ENCODE measurements at regions of chr2 and their contacts with region 1.

Region 1: GRCh38 chr2:216683846-216684507 is 11.4 kb downstream of the IGFBP5 start:
- DNase-seq: no peak
- ATAC-seq: peak; percentile 65 to 78
- H3K4me3 ChIP-seq: no peak overlapping the region
- H3K27ac ChIP-seq: peak overlapping the region; percentile 43
- H3K4me1 ChIP-seq: peaks cover 36% of the 10 kb centered on the region
- H3K27me3 ChIP-seq: no peaks in the 10 kb centered on the region
- CTCF ChIP-seq: no peak

Region 2: DNA sequence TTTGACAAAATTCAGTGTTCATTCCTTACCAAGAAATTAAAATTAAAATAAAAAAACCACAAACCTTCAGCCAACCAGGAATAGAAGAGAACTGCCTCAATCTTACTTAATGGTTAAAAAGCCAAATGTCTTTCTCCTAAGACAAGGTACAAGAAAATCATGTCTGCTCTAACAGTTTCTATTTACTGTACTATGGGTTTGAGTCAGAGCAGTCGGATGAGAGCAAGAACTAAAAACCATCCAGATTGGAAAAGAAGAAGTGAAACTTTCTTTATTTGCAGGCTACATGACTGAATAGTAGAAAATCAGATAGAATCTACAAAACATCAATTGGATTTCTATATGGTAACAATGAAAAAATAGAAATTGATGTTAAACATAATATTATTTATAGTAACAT is 731.3 kb after region 1 on chr2:
- intact Hi-C with region 1: no loop called
- DNase-seq: no peak
- ATAC-seq: no peak
- H3K4me3 ChIP-seq: no peak overlapping the region
- H3K27ac ChIP-seq: no peak overlapping the region
- H3K4me1 ChIP-seq: no peaks in the 10 kb centered on the region
- H3K27me3 ChIP-seq: no peaks in the 10 kb centered on the region
- CTCF ChIP-seq: no peak

Region 3: DNA sequence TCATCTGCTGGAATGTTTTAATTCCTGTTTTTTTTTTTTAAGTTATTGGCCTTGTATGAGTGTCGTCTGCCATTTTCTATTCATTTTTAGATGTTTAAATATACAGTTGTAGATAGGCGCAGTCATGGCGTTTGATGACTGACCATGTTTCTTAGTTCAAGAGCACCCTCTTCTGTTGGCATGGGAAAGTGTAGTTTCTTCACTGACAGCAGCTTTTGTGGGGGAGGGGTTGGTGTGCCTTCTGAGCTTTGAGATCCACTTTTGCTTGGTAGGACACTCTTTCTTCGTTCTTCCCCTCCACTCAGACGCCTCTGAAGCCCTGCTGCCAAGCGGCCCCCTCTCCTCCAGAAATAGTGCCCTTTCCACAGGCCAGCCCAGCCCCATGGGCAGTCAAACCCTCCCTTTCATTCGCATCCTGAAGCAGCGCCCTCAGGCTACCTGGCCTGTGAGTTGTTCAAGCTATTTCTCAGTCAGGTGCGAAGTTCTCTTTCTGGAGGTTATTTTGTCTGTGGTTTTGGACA is 826.9 kb after region 1 on chr2:
- intact Hi-C with region 1: loop called (anchors 5 kb)
- DNase-seq: no peak
- ATAC-seq: peak; percentile 82 to 84
- H3K4me3 ChIP-seq: no peak overlapping the region
- H3K27ac ChIP-seq: no peak overlapping the region
- H3K4me1 ChIP-seq: peaks cover 15% of the 10 kb centered on the region
- H3K27me3 ChIP-seq: no peaks in the 10 kb centered on the region
- CTCF ChIP-seq: peak; percentile 60